ENCODE measurements at regions of chr2 and their contacts with region 1.

Region 1: DNA sequence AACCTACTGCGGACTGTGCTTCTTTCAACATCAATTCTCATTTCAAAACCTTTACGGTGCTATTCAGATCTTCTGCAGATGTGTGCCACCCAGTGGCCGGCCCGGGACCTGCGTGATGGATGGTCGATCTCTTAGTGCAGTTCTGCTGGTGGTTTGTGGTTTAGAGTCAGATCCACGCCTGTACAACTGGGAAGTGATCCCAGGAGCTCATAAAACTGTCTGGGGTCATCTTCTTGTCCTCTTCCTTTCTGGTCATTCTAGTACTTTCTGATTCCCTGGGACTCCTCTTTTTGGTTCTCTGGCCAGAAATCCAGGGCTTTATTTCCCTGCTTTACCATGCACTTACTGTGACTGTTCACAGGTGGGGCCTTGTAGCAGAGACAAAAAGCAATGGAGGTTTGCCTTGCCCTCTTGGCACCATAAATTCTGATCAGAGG is 15.8 kb upstream of the SELENOI start:
- DNase-seq: peak; percentile 91
- H3K4me3 Mint-ChIP-seq: no peak overlapping the region
- H3K27ac Mint-ChIP-seq: peak overlapping the region; percentile 38
- H3K4me1 Mint-ChIP-seq: peaks cover 15% of the 10 kb centered on the region
- H3K27me3 Mint-ChIP-seq: peaks cover 3% of the 10 kb centered on the region

Region 2: DNA sequence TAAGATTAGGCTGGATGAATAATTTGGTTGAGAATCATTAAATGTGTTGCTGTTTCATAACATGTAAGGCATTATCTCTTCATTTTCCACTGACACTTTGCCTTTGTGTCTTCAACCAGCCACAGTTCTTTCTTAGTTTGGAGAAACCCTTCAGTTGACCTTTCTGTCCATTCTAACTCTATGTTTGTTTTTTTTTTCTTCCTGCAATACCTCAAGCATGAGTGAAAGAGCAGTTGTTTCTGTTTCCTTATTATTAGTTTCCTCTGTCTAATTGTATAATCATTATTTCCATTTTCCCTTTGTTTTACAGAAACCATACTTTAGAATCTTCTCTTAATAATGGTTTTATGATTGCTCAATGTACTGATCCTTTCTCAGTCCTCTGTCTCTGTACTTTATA is 59.8 kb before region 1 on chr2:
- CTCF ChIA-PET with region 1: no interaction called
- DNase-seq: no peak
- H3K4me3 Mint-ChIP-seq: no peak overlapping the region
- H3K27ac Mint-ChIP-seq: no peak overlapping the region
- H3K4me1 Mint-ChIP-seq: peaks cover 2% of the 10 kb centered on the region
- H3K27me3 Mint-ChIP-seq: no peaks in the 10 kb centered on the region

Region 3: GRCh38 chr2:26298638-26299393 is 31.3 kb before region 1 on chr2:
- CTCF ChIA-PET with region 1: no interaction called
- DNase-seq: peak; percentile 55
- H3K4me3 Mint-ChIP-seq: no peak overlapping the region
- H3K27ac Mint-ChIP-seq: no peak overlapping the region
- H3K4me1 Mint-ChIP-seq: no peaks in the 10 kb centered on the region
- H3K27me3 Mint-ChIP-seq: peaks cover 19% of the 10 kb centered on the region

Region 4: DNA sequence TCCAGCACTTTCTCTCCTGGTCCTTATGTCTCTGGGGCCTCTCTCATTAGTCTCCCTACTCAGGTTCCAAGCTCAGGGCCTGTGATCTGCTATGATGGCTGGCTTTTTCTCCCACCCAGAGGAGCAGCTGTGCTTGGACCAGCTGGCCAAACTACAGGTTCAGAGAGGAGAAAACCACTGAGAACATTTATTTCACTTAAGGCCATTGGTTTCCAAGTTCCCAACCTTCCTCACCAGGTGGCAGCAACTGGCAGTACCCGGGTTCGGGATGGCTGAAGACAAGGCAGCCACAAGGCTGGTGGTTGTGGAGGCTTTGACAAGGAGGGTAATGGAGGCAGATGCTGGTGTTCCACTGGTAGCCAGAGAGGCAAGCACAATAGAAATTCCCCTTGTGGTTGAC is 14.1 kb before region 1 on chr2:
- CTCF ChIA-PET with region 1: interaction called, 12 read pairs
- DNase-seq: no peak
- H3K4me3 Mint-ChIP-seq: no peak overlapping the region
- H3K27ac Mint-ChIP-seq: no peak overlapping the region
- H3K4me1 Mint-ChIP-seq: peaks cover 3% of the 10 kb centered on the region
- H3K27me3 Mint-ChIP-seq: peaks cover 15% of the 10 kb centered on the region

Measured in activated naive CD4-positive, alpha-beta T cell treated with anti-CD3 and anti-CD28 coated beads, Interleukin-2, amount 10 ng/mL, durations not matched to agents 7 days and 5 days (primary cell).